A673 (cell line): ENCODE measurements at regions of chr20 and their contacts with region 1.

Region 1: GRCh38 chr20:38434743-38435554 is at the start of gene SNHG17:
- DNase-seq: peak; percentile 96
- H3K4me3 ChIP-seq: peak within 1 kb of the TSS; percentile 86
- H3K27ac ChIP-seq: peak within 1 kb of the TSS; percentile 91
- H3K4me1 ChIP-seq: peaks cover 4% of the 10 kb centered on the region
- H3K27me3 ChIP-seq: no peaks in the 10 kb centered on the region
- CTCF ChIP-seq: peak; percentile 99
- total RNA-seq, gene SNHG17: 91.4 and 105 TPM in 2 replicates

Region 2: GRCh38 chr20:38109591-38110524 is 325.1 kb before region 1 on chr20:
- CTCF ChIA-PET with region 1: no interaction called
- POLR2A ChIA-PET with region 1: no interaction called
- intact Hi-C with region 1: no loop called
- DNase-seq: no peak
- H3K4me3 ChIP-seq: no peak overlapping the region
- H3K27ac ChIP-seq: no peak overlapping the region
- H3K4me1 ChIP-seq: no peaks in the 10 kb centered on the region
- H3K27me3 ChIP-seq: no peaks in the 10 kb centered on the region
- CTCF ChIP-seq: no peak

Region 3: GRCh38 chr20:38165089-38165989 is 269.6 kb before region 1 on chr20 and contains the start of gene TGM2:
- CTCF ChIA-PET with region 1: no interaction called
- POLR2A ChIA-PET with region 1: no interaction called
- intact Hi-C with region 1: no loop called
- DNase-seq: peak; percentile 62
- H3K4me3 ChIP-seq: peak within 1 kb of the TSS; percentile 35
- H3K27ac ChIP-seq: no peak within 1 kb of the TSS
- H3K4me1 ChIP-seq: no peaks in the 10 kb centered on the region
- H3K27me3 ChIP-seq: no peaks in the 10 kb centered on the region
- CTCF ChIP-seq: peak; percentile 75
- total RNA-seq, gene TGM2: 0.43 and 0.85 TPM in 2 replicates

Region 4: DNA sequence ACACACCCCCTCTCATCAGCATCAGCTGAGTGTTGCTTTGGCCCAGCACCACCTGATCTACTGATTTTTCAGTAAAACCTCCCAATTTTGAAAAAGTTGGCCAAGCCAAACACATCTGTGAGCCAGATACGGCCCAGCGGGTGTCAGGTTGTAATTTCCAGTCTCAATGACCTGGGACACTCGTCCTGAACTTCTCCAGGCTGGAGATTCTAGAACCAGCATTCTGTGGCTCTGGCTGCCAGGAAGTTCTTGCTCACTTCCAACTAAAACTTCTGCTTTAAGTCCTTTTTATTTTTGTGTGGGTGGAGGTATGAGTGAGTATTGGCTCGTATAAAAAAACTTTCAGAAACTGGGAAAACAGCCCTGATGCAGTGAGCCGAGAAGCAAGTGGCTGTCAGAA is 179.6 kb before region 1 on chr20:
- CTCF ChIA-PET with region 1: no interaction called
- POLR2A ChIA-PET with region 1: no interaction called
- intact Hi-C with region 1: no loop called
- DNase-seq: no peak
- H3K4me3 ChIP-seq: no peak overlapping the region
- H3K27ac ChIP-seq: no peak overlapping the region
- H3K4me1 ChIP-seq: no peaks in the 10 kb centered on the region
- H3K27me3 ChIP-seq: peaks cover 14% of the 10 kb centered on the region
- CTCF ChIP-seq: no peak

Region 5: GRCh38 chr20:38446441-38447209 is 11.7 kb after region 1 on chr20:
- CTCF ChIA-PET with region 1: interaction called, 14 read pairs
- POLR2A ChIA-PET with region 1: interaction called, 6 read pairs
- intact Hi-C with region 1: loop called (anchors 1 kb)
- DNase-seq: peak; percentile 96
- H3K4me3 ChIP-seq: peak overlapping the region; percentile 90
- H3K27ac ChIP-seq: peak overlapping the region; percentile 95
- H3K4me1 ChIP-seq: peaks cover 10% of the 10 kb centered on the region
- H3K27me3 ChIP-seq: no peaks in the 10 kb centered on the region
- CTCF ChIP-seq: peak; percentile 96

Region 6: DNA sequence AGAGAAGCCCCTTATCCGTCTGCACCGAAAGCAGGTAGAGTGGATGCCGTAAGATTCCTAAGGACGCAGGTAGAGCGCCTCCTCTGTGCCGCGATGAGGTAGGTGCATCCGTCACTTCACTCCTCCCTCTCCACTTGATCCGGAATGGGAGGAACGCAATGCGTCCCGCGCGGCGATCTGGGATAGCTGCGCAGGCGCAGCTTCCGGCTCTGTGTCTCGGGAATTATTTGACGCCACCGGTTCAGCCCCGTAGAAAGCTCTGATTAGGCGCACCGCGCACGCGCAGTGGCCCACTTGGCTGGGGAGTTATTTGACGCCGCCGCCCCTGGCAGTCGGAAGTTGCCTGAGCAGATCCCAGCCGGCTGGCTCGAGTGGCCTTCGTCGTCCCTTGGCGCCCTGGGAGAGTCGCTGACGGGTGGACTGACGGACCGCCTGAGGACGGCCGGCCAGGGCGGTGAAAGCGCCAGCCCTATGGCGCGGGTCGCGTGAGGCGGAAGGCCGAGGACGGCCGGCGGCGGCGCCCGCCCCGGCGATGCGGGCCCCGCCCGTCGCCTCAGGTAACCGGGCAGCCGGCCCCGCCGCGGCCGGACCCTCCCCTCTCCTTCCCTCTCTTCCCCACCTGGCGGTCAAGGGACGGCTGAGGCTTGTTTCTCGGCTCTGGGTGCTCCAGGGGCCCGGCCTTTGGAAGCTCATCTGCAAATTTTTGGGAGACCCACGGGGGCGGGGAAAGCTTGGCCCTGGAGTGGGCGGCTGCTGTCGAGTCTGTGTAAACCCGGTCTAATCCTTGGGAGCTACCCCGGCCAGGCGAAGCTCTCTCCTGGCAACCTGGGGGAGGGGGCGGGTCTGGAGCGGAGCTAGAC is 37.8 kb after region 1 on chr20 and contains the start of gene RALGAPB:
- CTCF ChIA-PET with region 1: interaction called, 4 read pairs
- POLR2A ChIA-PET with region 1: interaction called, 10 read pairs
- intact Hi-C with region 1: loop called (anchors 2 kb)
- DNase-seq: peak; percentile 99
- H3K4me3 ChIP-seq: peak within 1 kb of the TSS; percentile 86
- H3K27ac ChIP-seq: peak within 1 kb of the TSS; percentile 85
- H3K4me1 ChIP-seq: peaks cover 8% of the 10 kb centered on the region
- H3K27me3 ChIP-seq: no peaks in the 10 kb centered on the region
- CTCF ChIP-seq: peak; percentile 58
- total RNA-seq, gene RALGAPB: 32.6 and 34.4 TPM in 2 replicates